Calu3 (cell line): ENCODE measurements at regions of chr1 and their contacts with region 1.

Region 1: GRCh38 chr1:180365039-180365438 is 135.0 kb downstream of the LHX4 start:
- DNase-seq: peak; percentile 20
- H3K4me3 Mint-ChIP-seq: no peak overlapping the region
- H3K27ac Mint-ChIP-seq: no peak overlapping the region
- H3K4me1 Mint-ChIP-seq: peaks cover 12% of the 10 kb centered on the region
- H3K27me3 Mint-ChIP-seq: no peaks in the 10 kb centered on the region
- CTCF ChIP-seq: no peak

Region 2: DNA sequence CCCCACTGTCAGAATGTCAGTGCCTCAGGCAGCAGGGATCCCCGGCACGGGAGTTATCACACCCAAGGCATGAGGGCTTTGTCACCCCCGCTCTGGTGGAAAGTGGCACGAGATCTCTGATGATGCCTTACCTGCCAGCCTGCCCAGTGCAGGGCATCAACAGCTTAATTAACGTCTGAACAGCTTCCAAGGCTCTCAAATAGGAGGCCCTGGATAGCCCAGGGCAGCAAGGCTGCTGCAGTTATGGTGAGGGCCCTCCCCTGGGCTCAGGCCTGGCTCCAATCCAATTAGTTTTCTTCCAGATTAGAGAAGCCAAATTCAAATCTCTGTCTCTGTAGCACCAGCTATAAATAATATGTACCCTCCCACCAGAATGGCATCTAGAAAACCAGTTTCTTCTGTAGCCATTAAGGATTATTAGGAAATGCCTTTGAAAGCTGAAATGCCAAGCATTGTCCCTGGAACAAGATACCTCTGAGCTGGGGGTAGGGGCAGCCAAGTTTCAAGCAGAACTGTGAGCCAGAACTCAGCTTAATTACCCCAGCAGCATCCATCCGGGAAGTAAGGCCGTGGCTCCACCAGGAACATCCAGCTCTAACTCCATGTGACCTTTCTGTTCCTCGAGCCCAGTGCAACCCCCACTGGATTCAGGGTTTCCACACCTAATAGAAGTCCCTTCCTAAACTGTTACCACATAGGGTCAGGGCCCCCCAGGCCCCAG is 197.9 kb before region 1 on chr1:
- CTCF ChIA-PET with region 1: no interaction called
- intact Hi-C with region 1: no loop called
- DNase-seq: no peak
- H3K4me3 Mint-ChIP-seq: no peak overlapping the region
- H3K27ac Mint-ChIP-seq: peak overlapping the region; percentile 66
- H3K4me1 Mint-ChIP-seq: peaks cover 96% of the 10 kb centered on the region
- H3K27me3 Mint-ChIP-seq: no peaks in the 10 kb centered on the region
- CTCF ChIP-seq: no peak

Region 3: DNA sequence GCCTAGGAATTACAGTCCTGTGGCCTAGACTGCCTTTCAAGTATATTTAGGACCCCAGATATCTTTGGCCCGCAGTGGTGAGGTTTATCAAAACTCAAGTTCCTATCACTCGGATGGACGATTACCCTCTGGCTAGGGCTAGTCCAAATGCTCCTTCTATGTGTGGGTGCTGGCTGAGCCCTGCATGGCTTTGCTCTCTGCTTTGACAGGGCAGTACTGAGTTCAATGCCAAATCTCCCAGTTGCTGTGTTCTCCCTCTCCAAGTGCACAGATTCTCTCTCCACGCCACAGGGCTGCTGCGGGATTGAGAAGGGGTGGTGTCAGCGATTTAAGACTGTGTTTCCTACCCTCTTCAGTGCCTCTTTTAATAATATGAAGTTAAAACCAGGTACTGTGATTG is 38.0 kb before region 1 on chr1:
- CTCF ChIA-PET with region 1: no interaction called
- intact Hi-C with region 1: no loop called
- DNase-seq: no peak
- H3K4me3 Mint-ChIP-seq: no peak overlapping the region
- H3K27ac Mint-ChIP-seq: no peak overlapping the region
- H3K4me1 Mint-ChIP-seq: no peaks in the 10 kb centered on the region
- H3K27me3 Mint-ChIP-seq: no peaks in the 10 kb centered on the region
- CTCF ChIP-seq: no peak

Region 4: DNA sequence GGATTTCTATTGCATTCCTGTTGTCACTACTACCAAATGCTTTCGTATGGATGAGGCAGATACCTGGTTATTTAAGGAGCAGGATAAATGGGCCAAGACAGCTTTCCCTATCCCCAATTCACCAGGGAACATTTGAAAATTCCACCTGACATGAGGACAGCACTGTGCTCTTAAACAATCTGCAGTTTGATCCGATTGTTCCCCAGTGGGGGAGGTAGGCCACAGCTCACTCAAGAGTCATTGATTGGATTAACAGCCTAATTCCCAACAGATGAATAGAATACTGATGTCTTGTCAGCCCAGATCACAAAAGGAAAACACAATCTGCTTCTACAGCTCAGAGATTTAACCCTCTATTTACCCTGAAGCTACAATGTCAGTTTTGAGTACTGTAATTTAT is 11.1 kb before region 1 on chr1:
- CTCF ChIA-PET with region 1: interaction called, 16 read pairs
- intact Hi-C with region 1: no loop called
- DNase-seq: no peak
- H3K4me3 Mint-ChIP-seq: no peak overlapping the region
- H3K27ac Mint-ChIP-seq: no peak overlapping the region
- H3K4me1 Mint-ChIP-seq: no peaks in the 10 kb centered on the region
- H3K27me3 Mint-ChIP-seq: no peaks in the 10 kb centered on the region
- CTCF ChIP-seq: no peak

Region 5: DNA sequence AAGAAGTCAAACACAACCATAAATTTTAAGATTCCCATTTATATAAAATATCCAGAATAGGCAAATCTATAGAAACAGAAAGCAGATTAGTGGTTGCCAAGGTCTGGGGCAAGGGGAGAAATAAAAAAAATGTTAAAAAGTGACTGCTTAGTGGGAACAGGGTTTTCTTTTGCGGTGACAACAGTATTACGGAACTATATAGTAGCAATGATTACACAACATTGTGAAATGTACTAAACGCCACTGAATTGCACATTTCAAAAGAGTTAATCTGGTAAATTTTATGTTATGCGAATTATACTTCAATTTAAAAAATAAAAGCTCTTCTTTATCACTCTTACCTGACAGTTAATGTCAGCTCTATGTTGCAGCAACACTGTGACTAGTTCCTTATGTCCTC is 32.1 kb after region 1 on chr1:
- CTCF ChIA-PET with region 1: no interaction called
- intact Hi-C with region 1: loop called (anchors 2 kb)
- DNase-seq: no peak
- H3K4me3 Mint-ChIP-seq: no peak overlapping the region
- H3K27ac Mint-ChIP-seq: no peak overlapping the region
- H3K4me1 Mint-ChIP-seq: no peaks in the 10 kb centered on the region
- H3K27me3 Mint-ChIP-seq: no peaks in the 10 kb centered on the region
- CTCF ChIP-seq: no peak